ENCODE measurements at regions of chr9 and their contacts with region 1.

Region 1: DNA sequence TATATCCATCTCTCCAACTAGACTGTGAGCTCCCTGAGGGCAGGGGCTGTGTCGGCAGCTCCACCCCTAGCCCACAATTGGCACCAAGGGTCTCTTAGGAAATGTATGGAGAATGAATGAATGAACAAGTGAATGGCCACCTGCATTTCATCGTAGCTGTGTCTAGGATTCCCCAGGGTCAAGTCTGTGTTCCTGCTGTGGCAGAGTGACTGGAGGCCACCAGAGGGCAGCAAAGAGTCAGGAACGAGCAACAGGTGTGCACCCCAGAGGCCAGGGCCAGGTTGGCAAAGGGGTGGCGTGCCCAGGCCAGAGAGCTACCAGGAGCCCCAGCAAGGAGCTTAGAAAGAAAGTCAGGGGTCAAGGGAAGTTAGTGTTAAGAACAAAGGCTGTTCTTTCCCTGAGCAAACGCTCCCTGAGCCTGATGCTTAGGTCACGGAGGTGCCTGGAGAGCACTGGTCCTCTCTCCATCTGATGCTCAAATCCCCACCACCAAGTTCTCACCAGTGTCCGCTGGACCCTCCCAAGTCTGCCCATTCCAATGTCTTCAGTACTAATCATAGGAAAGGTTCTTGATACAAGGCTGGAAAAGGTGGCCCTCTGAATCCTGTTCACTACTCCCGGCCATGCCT is 160.7 kb downstream of the PAX5 start:
- DNase-seq: peak; percentile 86
- H3K4me3 ChIP-seq: no peak overlapping the region; a peak in 1 of 4 replicates
- H3K27ac ChIP-seq: no peak overlapping the region
- H3K4me1 ChIP-seq: peaks cover 0 to 5% of the 10 kb centered on the region in 2 experiments; a peak in 1 of 4 replicates
- H3K27me3 ChIP-seq: peaks cover 18% of the 10 kb centered on the region; the same call in 1 of the 2 replicates
- CTCF ChIP-seq: peak; percentile 92
- EP300 ChIP-seq: no peak
- RAD21 ChIP-seq: peak; percentile 89

Region 2: DNA sequence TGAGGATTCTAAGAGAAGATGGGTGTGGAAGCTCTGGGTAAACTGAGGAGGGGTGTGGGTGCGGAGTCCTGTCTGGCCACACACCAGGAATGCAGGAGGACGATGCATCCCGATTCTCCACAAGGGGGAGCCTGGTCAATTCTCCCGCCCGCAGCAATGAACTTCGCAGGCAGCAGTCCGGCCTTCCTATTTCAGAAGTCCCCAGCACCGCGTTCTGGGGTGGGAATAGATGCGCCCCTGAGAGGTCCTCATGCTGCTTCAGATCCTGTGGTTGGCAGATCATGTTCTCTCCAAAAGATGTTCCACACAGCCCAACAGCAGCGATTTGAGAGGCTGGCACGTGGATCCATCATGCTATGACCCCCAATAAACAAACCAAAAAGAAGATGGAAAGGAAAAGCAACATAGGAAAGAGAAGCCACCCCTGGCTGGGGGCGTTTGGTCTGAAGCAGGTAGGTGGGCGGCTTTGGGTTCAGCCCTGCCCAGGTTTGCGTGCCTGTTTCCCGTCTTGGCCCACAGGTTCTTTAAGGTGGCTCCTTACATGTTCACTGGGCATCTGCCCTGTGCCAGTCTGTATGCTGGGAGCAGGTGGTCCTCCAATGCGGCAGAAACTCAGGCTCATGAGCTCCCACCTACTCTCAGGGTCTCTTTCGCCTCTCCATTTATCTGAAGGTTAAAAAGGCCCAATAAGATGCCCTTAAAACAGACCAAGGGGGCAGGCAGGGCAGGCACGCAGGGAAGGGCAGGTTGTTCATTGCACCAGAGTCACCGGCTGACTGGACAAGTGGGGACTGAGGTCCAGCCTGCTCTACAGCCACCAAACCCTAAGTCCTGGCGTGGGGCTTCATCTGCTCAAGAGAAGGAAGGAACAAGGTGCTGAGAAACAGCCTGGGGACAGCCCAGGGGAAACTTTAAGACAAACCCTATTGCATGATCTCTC is 10.9 kb before region 1 on chr9:
- CTCF ChIA-PET with region 1: interaction called, 68 read pairs
- POLR2A ChIA-PET with region 1: no interaction called
- DNase-seq: peak; percentile 80
- H3K4me3 ChIP-seq: no peak overlapping the region; a peak in 1 of 4 replicates
- H3K27ac ChIP-seq: no peak overlapping the region
- H3K4me1 ChIP-seq: no peaks in the 10 kb centered on the region
- H3K27me3 ChIP-seq: peaks cover 22% of the 10 kb centered on the region
- CTCF ChIP-seq: peak; percentile 64
- EP300 ChIP-seq: no peak
- RAD21 ChIP-seq: peak; percentile 61

Region 3: GRCh38 chr9:36911037-36911436 is 37.7 kb after region 1 on chr9:
- CTCF ChIA-PET with region 1: interaction called, 10 read pairs
- POLR2A ChIA-PET with region 1: no interaction called
- DNase-seq: no peak
- H3K4me3 ChIP-seq: no peak overlapping the region
- H3K27ac ChIP-seq: no peak overlapping the region
- H3K4me1 ChIP-seq: no peaks in the 10 kb centered on the region; a peak in 1 of 4 replicates
- H3K27me3 ChIP-seq: peaks cover 36% of the 10 kb centered on the region; the same call in 1 of the 2 replicates
- CTCF ChIP-seq: no peak
- EP300 ChIP-seq: no peak
- RAD21 ChIP-seq: no peak

Region 4: GRCh38 chr9:36980148-36980974 is 107.0 kb after region 1 on chr9:
- CTCF ChIA-PET with region 1: interaction called, 11 read pairs
- POLR2A ChIA-PET with region 1: no interaction called
- DNase-seq: peak; percentile 72
- H3K4me3 ChIP-seq: no peak overlapping the region
- H3K27ac ChIP-seq: peak overlapping the region in 1 of 2 experiments; percentile 22; a peak in 1 of 4 replicates
- H3K4me1 ChIP-seq: peaks cover 0 to 13% of the 10 kb centered on the region in 2 experiments; a peak in 1 of 4 replicates
- H3K27me3 ChIP-seq: peaks cover 21% of the 10 kb centered on the region; the same call in 1 of the 2 replicates
- CTCF ChIP-seq: no peak; the same call in 1 of the 2 replicates
- EP300 ChIP-seq: no peak; a peak in 1 of 4 replicates
- RAD21 ChIP-seq: peak; percentile 68

Region 5: DNA sequence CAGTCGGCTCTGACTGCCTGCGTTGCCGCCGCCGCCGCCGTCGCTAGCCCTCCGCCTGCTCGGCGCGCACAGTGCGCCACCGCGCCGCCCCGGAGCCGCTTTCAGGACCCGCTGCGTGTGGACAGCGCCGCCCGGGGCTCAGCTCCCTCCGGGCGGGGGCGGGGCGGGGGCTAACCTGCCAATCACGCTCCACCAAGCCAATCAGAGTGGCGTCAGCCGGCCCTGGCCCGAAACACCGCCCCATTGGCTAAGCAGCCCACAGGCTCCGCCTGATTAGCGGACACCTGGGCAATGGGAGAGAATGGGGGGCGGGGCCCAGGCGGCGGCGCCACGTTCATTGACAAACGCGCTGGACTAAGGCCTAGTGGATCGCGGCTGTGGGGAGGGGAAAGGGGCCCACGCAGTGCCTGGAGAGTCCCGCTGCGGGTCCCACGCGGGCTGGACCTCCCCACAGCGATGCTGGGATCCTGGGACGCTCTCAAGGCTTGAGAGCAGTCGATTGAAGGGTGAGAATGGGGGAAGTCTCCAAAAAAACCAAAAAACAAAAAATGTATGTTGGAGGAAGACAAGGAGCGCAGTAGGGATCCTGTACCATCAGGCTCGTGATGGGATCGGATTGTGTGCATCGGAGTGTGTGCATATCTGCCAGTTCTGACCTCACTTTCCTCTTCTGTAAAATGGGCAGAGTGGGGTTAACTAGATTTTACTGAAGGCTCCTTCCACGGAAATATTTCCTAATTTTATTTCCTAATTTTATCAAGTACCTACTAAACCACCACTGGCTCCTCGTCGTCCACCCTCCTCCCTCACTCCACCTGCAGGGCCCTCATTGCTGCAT is 154.4 kb after region 1 on chr9:
- CTCF ChIA-PET with region 1: interaction called, 14 read pairs
- POLR2A ChIA-PET with region 1: no interaction called
- DNase-seq: peak; percentile 99
- H3K4me3 ChIP-seq: peak overlapping the region; percentile 46 to 51
- H3K27ac ChIP-seq: no peak overlapping the region; a peak in 1 of 4 replicates
- H3K4me1 ChIP-seq: peaks cover 4 to 15% of the 10 kb centered on the region in 2 experiments; a peak in 2 of 4 replicates
- H3K27me3 ChIP-seq: peaks cover 69% of the 10 kb centered on the region
- CTCF ChIP-seq: no peak
- EP300 ChIP-seq: no peak
- RAD21 ChIP-seq: no peak

Region 6: GRCh38 chr9:37329576-37329975 is 456.2 kb after region 1 on chr9:
- CTCF ChIA-PET with region 1: interaction called, 22 read pairs
- POLR2A ChIA-PET with region 1: no interaction called
- DNase-seq: peak; percentile 9
- H3K4me3 ChIP-seq: no peak overlapping the region
- H3K27ac ChIP-seq: no peak overlapping the region
- H3K4me1 ChIP-seq: peaks cover 6 to 10% of the 10 kb centered on the region in 2 experiments; a peak in 3 of 4 replicates
- H3K27me3 ChIP-seq: no peaks in the 10 kb centered on the region
- CTCF ChIP-seq: peak; percentile 61
- EP300 ChIP-seq: no peak
- RAD21 ChIP-seq: peak; percentile 71

Measured in SK-N-SH (cell line).